ENCODE measurements at regions of chr5 and their contacts with region 1.

Region 1: GRCh38 chr5:82351754-82352145 is 73.6 kb upstream of the RPS23 start:
- DNase-seq: peak; percentile 75
- H3K4me3 Mint-ChIP-seq: no peak overlapping the region
- H3K27ac Mint-ChIP-seq: no peak overlapping the region
- H3K4me1 Mint-ChIP-seq: peaks cover 50% of the 10 kb centered on the region
- H3K27me3 Mint-ChIP-seq: no peaks in the 10 kb centered on the region

Region 2: GRCh38 chr5:82375531-82376244 is 23.9 kb after region 1 on chr5:
- intact Hi-C with region 1: no loop called
- DNase-seq: no peak
- H3K4me3 Mint-ChIP-seq: no peak overlapping the region
- H3K27ac Mint-ChIP-seq: no peak overlapping the region
- H3K4me1 Mint-ChIP-seq: peaks cover 15% of the 10 kb centered on the region
- H3K27me3 Mint-ChIP-seq: no peaks in the 10 kb centered on the region

Region 3: GRCh38 chr5:82494942-82495341 is 143.2 kb after region 1 on chr5:
- intact Hi-C with region 1: loop called (anchors 10 kb)
- DNase-seq: no peak
- H3K4me3 Mint-ChIP-seq: no peak overlapping the region
- H3K27ac Mint-ChIP-seq: no peak overlapping the region
- H3K4me1 Mint-ChIP-seq: peaks cover 1% of the 10 kb centered on the region
- H3K27me3 Mint-ChIP-seq: peaks cover 11% of the 10 kb centered on the region

Region 4: DNA sequence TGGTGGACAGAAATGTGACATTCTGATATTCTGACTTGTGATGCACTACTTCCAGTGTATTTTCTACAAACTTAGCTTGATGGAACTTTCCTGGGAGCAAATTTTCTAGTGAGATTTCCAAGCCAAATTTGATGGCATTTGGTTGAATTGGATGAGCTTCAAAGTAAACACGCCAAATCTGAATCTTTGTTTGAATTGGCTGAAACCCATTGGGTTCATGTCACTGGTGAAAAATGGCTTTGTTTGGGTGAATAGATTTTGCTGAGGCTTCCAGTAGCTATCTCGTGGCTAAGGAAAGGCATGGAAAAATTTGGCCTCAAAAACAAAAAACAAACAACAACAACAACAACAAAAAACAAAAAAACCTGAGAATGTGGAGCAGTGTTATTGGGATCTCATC is 197.5 kb after region 1 on chr5:
- intact Hi-C with region 1: no loop called
- DNase-seq: no peak
- H3K4me3 Mint-ChIP-seq: no peak overlapping the region
- H3K27ac Mint-ChIP-seq: no peak overlapping the region
- H3K4me1 Mint-ChIP-seq: no peaks in the 10 kb centered on the region
- H3K27me3 Mint-ChIP-seq: peaks cover 23% of the 10 kb centered on the region

Region 5: GRCh38 chr5:82793808-82794419 is 442.2 kb after region 1 on chr5:
- intact Hi-C with region 1: loop called (anchors 1 kb)
- DNase-seq: peak; percentile 81
- H3K4me3 Mint-ChIP-seq: no peak overlapping the region
- H3K27ac Mint-ChIP-seq: no peak overlapping the region
- H3K4me1 Mint-ChIP-seq: peaks cover 4% of the 10 kb centered on the region
- H3K27me3 Mint-ChIP-seq: peaks cover 10% of the 10 kb centered on the region

Region 6: DNA sequence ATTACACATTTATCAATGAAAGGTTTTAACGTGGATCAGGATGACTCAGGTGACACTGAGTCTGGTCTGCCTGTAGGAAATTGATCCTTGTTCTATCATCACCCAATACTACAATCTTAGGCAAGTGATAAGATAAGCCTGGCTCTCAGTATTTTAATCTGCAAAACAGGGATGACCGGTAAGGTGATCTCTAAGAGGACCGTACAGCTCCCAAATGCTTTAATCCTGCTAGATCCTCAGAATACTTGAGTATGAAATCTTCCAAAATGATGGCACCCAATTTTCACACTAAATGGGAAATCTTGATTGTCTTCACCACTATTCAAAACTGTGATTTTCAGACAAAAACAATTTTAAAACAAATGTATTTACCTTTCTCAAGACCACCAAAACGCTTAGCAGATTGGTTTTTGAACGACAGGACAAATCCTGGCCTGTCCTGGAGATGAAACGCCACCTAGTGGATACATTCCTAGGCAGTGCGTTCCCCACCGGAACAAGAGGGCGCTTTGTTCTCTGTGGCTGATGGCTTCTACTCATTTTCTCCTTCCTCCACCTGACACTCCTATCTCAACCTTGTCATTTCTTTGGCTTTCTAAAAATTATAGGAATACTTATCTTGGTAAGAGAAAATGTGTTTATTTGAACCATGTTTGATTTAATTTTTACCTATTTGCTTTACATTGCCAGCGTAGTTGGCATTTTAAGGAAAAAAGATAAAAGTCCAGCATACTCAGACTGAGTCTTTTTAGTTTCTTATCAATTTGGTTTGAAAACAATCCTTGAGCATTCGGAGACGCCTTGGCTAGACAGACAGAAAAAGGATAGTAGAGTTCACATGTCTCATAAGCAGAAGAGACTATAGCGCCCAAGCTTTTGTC is 1078.6 kb after region 1 on chr5:
- intact Hi-C with region 1: loop called (anchors 1 kb)
- DNase-seq: peak; percentile 87
- H3K4me3 Mint-ChIP-seq: no peak overlapping the region
- H3K27ac Mint-ChIP-seq: no peak overlapping the region
- H3K4me1 Mint-ChIP-seq: no peaks in the 10 kb centered on the region
- H3K27me3 Mint-ChIP-seq: peaks cover 3% of the 10 kb centered on the region

Region 7: DNA sequence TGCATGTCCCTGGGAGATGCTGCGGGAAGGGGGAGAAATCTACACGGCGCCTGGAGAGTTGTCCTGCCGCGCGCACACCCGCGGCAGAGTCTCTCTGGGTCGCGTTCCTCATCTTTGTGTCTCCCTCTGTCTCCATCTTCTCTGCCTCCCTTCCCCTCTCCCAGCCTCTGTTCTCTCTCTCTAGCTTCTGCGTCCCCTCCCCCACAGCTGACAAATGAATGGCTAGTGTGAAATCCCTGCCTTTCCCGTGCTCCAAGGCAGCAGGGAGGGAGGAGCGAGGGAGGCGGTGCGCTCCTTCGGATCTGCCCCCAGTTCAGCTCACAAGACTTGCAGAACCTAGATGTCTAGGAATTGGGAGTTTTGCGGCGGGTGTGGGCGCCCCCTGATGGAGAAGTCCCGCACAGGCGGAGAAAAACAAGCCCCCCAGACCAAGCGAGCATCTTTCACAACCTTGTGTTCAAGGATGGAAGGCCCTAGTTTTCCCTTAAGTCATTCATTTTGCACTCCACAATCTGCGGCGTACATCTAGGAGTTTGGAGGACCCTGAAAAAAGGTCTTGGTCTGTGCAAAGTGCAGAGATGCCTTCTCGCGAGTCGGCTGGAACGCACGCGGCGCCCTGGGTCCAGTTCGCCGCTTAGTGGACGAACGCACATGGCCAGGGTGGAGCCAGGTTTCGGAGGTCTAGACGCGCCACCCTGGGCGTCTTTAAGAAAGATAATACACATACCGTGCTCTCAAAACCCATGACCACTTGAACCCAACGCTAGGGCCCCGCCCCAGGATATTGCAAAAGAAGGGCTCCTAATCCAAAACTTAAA is 1121.8 kb after region 1 on chr5:
- intact Hi-C with region 1: loop called (anchors 5 kb)
- DNase-seq: peak; percentile 86
- H3K4me3 Mint-ChIP-seq: peak overlapping the region; percentile 96
- H3K27ac Mint-ChIP-seq: peak overlapping the region; percentile 3
- H3K4me1 Mint-ChIP-seq: peaks cover 25% of the 10 kb centered on the region
- H3K27me3 Mint-ChIP-seq: peaks cover 77% of the 10 kb centered on the region

Region 8: GRCh38 chr5:83564069-83564749 is 1212.5 kb after region 1 on chr5:
- intact Hi-C with region 1: loop called (anchors 1 kb)
- DNase-seq: no peak
- H3K4me3 Mint-ChIP-seq: no peak overlapping the region
- H3K27ac Mint-ChIP-seq: no peak overlapping the region
- H3K4me1 Mint-ChIP-seq: no peaks in the 10 kb centered on the region
- H3K27me3 Mint-ChIP-seq: peaks cover 32% of the 10 kb centered on the region

Measured in activated CD4-positive, alpha-beta T cell treated with anti-CD3 and anti-CD28 coated beads, Interleukin-2, amount 10 ng/mL, durations not matched to agents 24 days and 14 days (primary cell).